ENCODE measurements at regions of chr3 and their contacts with region 1.

Region 1: DNA sequence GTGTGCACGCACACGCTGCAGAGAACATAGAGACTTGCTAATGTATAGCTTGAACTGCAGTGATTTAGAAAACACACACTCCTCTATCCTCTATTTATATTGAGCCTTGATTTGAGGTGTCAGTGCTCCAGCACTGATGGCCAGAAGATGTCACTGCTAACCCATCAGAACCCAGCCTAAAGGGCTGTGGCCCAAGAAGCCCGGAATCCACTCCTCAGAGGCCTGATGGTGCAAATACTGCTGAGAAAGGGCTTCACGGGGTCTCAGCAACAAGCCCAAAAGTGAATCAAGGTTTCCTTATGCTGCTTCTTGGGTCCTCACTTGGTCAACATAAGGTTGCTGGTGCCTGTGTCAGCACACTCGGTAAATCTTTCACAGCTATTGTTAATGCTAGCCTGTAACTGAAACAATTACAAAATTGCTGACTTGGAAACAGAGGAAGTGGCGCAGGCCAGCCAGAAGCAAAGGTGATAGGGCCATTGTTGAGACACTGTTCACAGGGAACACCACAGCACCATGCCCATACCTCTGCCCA is 60.3 kb downstream of the HEG1 start:
- DNase-seq: peak; percentile 38
- H3K4me3 ChIP-seq: no peak overlapping the region
- H3K27ac ChIP-seq: peak overlapping the region; percentile 69
- H3K4me1 ChIP-seq: peaks cover 79% of the 10 kb centered on the region
- H3K27me3 ChIP-seq: no peaks in the 10 kb centered on the region
- CTCF ChIP-seq: peak; percentile 82

Region 2: DNA sequence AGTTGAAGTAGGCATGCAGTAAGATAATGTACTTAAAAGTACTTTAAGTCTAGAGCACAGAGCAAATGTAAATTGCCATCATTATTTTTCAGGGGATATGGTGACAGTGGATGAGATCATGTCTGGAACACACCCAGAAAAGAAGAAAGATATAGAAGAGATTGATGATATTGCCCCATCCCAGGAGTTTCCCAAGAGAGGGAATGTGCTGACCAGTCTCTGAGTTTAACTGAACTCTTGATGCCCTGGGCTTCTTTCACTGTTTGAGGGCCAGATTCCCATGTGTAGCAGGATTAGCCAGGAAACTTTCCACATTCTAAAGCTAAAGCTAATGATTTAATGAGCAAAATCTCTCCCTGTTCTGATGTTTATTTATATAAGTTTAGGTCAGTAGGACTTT is 632.1 kb before region 1 on chr3:
- intact Hi-C with region 1: no loop called
- DNase-seq: no peak
- H3K4me3 ChIP-seq: no peak overlapping the region
- H3K27ac ChIP-seq: peak overlapping the region; percentile 17
- H3K4me1 ChIP-seq: peaks cover 6% of the 10 kb centered on the region
- H3K27me3 ChIP-seq: no peaks in the 10 kb centered on the region
- CTCF ChIP-seq: no peak

Region 3: GRCh38 chr3:124951511-124952281 is 43.8 kb before region 1 on chr3:
- intact Hi-C with region 1: no loop called
- DNase-seq: no peak
- H3K4me3 ChIP-seq: no peak overlapping the region
- H3K27ac ChIP-seq: no peak overlapping the region
- H3K4me1 ChIP-seq: no peaks in the 10 kb centered on the region
- H3K27me3 ChIP-seq: no peaks in the 10 kb centered on the region
- CTCF ChIP-seq: no peak

Region 4: GRCh38 chr3:125055913-125056745 is 60.6 kb after region 1 on chr3 and contains the start of gene HEG1:
- intact Hi-C with region 1: loop called (anchors 10 kb)
- DNase-seq: peak; percentile 93
- H3K4me3 ChIP-seq: peak within 1 kb of the TSS; percentile 90
- H3K27ac ChIP-seq: peak within 1 kb of the TSS; percentile 96
- H3K4me1 ChIP-seq: peaks cover 82% of the 10 kb centered on the region
- H3K27me3 ChIP-seq: no peaks in the 10 kb centered on the region
- CTCF ChIP-seq: no peak
- total RNA-seq, gene HEG1: 105 TPM

Region 5: DNA sequence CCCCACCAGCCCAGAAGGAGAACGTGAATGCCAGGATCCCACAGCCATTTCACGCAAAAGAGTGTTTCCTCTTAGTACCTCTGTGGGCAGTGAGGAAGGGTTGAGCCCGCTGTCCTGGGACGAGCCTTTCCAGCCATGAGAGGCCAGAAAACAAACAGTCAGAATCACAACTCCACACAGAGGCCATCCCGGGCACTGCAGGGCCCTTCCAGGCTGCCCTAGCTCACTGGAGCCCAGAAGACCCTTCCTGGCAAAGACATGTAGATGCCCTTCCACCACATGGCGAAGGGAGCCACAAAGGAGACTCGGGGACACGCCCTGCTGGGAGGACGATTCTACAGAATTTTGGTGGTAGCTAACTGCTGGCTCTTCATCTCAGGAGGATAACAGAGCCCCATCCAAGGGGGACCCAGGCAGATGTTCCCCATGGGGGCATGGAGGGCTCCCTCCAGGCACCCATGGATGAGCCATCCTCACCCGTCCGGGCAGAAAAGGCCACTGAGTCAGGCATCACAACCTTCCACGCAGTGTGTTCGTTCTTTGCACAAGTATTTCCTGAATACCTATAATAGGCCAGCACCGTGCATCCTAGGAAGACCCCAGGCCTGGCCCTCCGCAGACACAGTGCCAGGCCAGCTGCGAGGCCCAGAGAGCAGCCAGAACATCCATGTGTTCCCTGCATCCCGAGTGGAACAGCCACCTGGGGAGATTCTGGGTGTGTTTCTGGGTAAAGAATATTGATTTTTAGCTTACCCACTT is 169.8 kb after region 1 on chr3:
- intact Hi-C with region 1: loop called (anchors 5 kb)
- DNase-seq: peak; percentile 53
- H3K4me3 ChIP-seq: no peak overlapping the region
- H3K27ac ChIP-seq: no peak overlapping the region
- H3K4me1 ChIP-seq: peaks cover 42% of the 10 kb centered on the region
- H3K27me3 ChIP-seq: no peaks in the 10 kb centered on the region
- CTCF ChIP-seq: peak; percentile 89

Region 6: GRCh38 chr3:125381743-125382142 is 386.2 kb after region 1 on chr3:
- intact Hi-C with region 1: no loop called
- DNase-seq: no peak
- H3K4me3 ChIP-seq: no peak overlapping the region
- H3K27ac ChIP-seq: no peak overlapping the region
- H3K4me1 ChIP-seq: no peaks in the 10 kb centered on the region
- H3K27me3 ChIP-seq: peaks cover 5% of the 10 kb centered on the region
- CTCF ChIP-seq: no peak

Region 7: GRCh38 chr3:125437631-125438435 is 442.3 kb after region 1 on chr3:
- intact Hi-C with region 1: loop called (anchors 10 kb)
- DNase-seq: peak; percentile 41
- H3K4me3 ChIP-seq: no peak overlapping the region
- H3K27ac ChIP-seq: no peak overlapping the region
- H3K4me1 ChIP-seq: no peaks in the 10 kb centered on the region
- H3K27me3 ChIP-seq: no peaks in the 10 kb centered on the region
- CTCF ChIP-seq: peak; percentile 99

Measured in left ventricle myocardium inferior (tissue), 1 donor.